Activated CD8-positive, alpha-beta T cell treated with anti-CD3 and anti-CD28 coated beads for 36 hours (primary cell): ENCODE measurements at regions of chr14 and their contacts with region 1.

Region 1: DNA sequence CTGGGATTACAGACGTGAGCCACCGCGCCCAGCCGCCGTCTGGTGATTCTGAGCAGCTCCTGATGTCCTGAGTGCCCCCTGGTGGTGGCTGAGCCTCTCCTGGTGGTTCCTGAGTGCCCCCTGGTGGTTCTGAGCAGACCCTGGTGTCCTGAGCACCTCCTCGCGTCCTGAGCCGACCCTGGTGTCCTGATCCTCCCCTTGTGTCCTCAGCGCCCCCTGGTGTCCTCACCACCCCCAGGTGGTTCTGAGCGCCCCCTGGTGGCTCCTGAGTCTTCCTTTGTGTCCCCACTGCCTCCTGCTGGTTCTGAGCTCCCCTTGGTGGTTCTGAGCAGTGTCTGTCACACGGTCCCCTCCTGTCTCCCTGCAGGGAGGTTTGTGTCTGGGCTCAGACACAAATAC is 1304.9 kb downstream of the TMEM121 start:
- DNase-seq: peak; percentile 89
- ATAC-seq: peak; percentile 74
- H3K4me3 Mint-ChIP-seq: no peak overlapping the region
- H3K27ac Mint-ChIP-seq: no peak overlapping the region
- H3K4me1 Mint-ChIP-seq: no peaks in the 10 kb centered on the region
- H3K27me3 Mint-ChIP-seq: peaks cover 3% of the 10 kb centered on the region
- CTCF ChIP-seq: peak; percentile 91

Region 2: GRCh38 chr14:106436310-106436905 is 394.9 kb before region 1 on chr14:
- CTCF ChIA-PET with region 1: no interaction called
- POLR2A ChIA-PET with region 1: no interaction called
- intact Hi-C with region 1: no loop called
- DNase-seq: no peak
- ATAC-seq: no peak
- H3K4me3 Mint-ChIP-seq: no peak overlapping the region
- H3K27ac Mint-ChIP-seq: no peak overlapping the region
- H3K4me1 Mint-ChIP-seq: no peaks in the 10 kb centered on the region
- H3K27me3 Mint-ChIP-seq: no peaks in the 10 kb centered on the region
- CTCF ChIP-seq: no peak

Region 3: DNA sequence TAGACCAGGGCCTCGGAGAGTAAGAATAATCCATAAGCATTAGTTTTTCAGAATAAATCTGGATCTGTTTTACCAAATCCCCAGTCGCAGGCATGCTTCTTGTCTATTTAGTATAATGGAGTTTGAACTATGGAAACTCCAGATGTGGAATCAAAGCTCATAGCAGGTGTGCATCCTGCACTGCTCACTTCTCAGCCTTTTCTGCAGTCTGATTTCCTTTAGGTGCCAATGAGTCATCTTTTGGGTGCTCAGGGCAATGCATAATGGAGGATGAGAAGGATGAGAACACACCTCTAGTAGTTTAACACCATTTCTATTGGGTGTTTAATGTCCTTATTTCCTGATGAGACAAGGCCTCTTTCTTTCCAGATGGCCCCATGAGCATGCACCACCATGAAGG is 343.7 kb before region 1 on chr14:
- CTCF ChIA-PET with region 1: no interaction called
- POLR2A ChIA-PET with region 1: no interaction called
- intact Hi-C with region 1: no loop called
- DNase-seq: no peak
- ATAC-seq: peak; percentile 35
- H3K4me3 Mint-ChIP-seq: no peak overlapping the region
- H3K27ac Mint-ChIP-seq: no peak overlapping the region
- H3K4me1 Mint-ChIP-seq: peaks cover 17% of the 10 kb centered on the region
- H3K27me3 Mint-ChIP-seq: no peaks in the 10 kb centered on the region
- CTCF ChIP-seq: no peak

Region 4: DNA sequence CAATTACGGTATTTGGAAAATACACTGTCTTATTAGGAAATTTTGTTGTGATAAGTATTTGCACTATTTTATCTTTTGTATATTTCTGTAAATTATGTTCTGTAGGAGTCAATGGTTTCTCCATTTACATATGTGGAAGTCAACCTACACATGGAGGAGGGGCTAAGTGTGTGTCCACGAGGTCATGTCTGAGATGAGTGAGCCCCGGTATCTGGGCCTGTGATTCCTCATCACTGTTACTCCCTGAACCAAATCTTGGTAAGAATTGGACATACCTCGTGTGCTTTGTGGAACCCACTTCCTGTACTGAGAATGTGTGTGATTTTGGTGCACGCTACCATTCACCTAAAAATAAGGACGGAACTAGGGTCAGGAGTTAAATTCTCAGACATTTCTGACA is 199.4 kb before region 1 on chr14:
- CTCF ChIA-PET with region 1: no interaction called
- POLR2A ChIA-PET with region 1: no interaction called
- intact Hi-C with region 1: no loop called
- DNase-seq: peak; percentile 19
- ATAC-seq: peak; percentile 30
- H3K4me3 Mint-ChIP-seq: no peak overlapping the region
- H3K27ac Mint-ChIP-seq: no peak overlapping the region
- H3K4me1 Mint-ChIP-seq: no peaks in the 10 kb centered on the region
- H3K27me3 Mint-ChIP-seq: peaks cover 19% of the 10 kb centered on the region
- CTCF ChIP-seq: no peak

Region 5: DNA sequence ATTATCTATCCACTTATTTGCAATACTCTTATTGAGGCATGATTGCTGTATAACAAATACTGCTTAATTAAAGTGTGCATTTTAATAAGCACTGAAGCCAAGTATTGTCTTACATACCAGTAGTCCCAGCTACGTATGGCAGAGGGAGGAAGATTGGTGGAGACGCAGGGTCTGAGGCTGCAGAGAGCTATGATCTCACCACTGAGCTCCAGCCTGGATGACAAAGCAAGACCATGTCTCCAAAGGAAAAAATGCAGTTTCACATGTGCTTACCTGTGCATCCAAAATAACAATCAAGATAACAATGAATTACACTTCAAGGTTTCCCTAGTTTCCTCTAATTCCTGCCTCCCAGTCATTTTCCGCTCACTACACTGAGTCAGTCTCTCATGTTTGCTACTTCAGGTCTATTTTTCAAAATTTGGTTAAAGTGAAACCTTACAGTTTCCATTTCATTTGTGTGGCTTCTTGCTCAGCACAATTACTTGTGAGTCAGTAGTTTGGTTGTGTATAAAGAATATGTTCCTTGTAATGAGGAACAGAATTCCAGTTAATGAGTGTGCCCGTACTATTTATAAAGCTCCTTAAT is 54.8 kb before region 1 on chr14:
- CTCF ChIA-PET with region 1: interaction called, 20 read pairs
- POLR2A ChIA-PET with region 1: no interaction called
- intact Hi-C with region 1: no loop called
- DNase-seq: no peak
- ATAC-seq: no peak
- H3K4me3 Mint-ChIP-seq: no peak overlapping the region
- H3K27ac Mint-ChIP-seq: no peak overlapping the region
- H3K4me1 Mint-ChIP-seq: peaks cover 17% of the 10 kb centered on the region
- H3K27me3 Mint-ChIP-seq: no peaks in the 10 kb centered on the region
- CTCF ChIP-seq: no peak

Region 6: DNA sequence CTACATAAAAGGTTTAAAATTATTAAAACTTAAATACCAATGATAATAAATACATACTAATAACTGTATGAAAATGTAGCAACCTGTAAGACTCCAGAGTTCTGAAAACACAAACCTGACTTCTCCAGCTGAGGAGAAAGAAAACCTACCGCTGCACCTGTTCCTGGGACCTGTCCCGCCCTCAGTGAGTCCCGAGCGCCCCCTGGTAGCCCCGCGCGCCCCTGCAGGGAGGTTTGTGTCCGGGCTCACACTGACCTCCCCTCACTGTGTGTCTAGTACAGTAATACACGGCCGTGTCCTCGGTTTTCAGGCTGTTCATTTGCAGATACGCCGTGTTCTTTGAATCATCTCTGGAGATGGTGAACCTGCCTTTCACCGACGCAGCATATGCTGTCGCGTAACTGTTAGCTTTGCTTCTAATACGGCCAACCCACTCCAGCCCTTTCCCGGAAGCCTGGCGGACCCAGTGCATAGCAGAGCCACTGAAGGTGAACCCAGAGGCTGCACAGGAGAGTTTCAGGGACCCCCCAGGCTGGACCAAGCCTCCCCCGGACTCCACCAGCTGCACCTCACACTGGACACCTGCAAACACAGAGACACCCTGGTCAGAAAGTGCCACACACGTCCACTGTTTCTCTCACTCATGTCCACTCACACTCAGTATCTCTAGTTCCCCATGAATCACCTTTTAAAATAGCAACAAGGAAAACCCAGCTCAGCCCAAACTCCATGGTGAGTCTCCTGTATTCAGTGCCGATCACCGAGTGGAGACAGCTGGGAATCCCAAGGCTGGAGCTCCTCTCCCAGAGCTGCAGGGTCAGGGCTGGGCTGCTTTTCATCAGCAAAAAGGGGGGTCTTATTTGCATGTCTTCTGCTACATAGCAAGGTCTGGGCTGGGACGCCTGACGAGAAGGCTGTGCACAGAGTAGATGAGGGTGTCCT is 28.6 kb before region 1 on chr14:
- CTCF ChIA-PET with region 1: interaction called, 32 read pairs
- POLR2A ChIA-PET with region 1: no interaction called
- intact Hi-C with region 1: no loop called
- DNase-seq: peak; percentile 43
- ATAC-seq: no peak
- H3K4me3 Mint-ChIP-seq: no peak overlapping the region
- H3K27ac Mint-ChIP-seq: no peak overlapping the region
- H3K4me1 Mint-ChIP-seq: no peaks in the 10 kb centered on the region
- H3K27me3 Mint-ChIP-seq: peaks cover 46% of the 10 kb centered on the region
- CTCF ChIP-seq: peak; percentile 44

Region 7: GRCh38 chr14:106844608-106845285 is 13.4 kb after region 1 on chr14:
- CTCF ChIA-PET with region 1: interaction called, 176 read pairs
- POLR2A ChIA-PET with region 1: interaction called, 8 read pairs
- intact Hi-C with region 1: no loop called
- DNase-seq: peak; percentile 65
- ATAC-seq: peak; percentile 45
- H3K4me3 Mint-ChIP-seq: peak overlapping the region; percentile 86
- H3K27ac Mint-ChIP-seq: peak overlapping the region; percentile 87
- H3K4me1 Mint-ChIP-seq: peaks cover 38% of the 10 kb centered on the region
- H3K27me3 Mint-ChIP-seq: no peaks in the 10 kb centered on the region
- CTCF ChIP-seq: no peak

Region 8: GRCh38 chr14:106879241-106879640 is 47.9 kb after region 1 on chr14:
- CTCF ChIA-PET with region 1: interaction called, 298 read pairs
- POLR2A ChIA-PET with region 1: no interaction called
- intact Hi-C with region 1: no loop called
- DNase-seq: peak; percentile 91
- ATAC-seq: peak; percentile 92
- H3K4me3 Mint-ChIP-seq: no peak overlapping the region
- H3K27ac Mint-ChIP-seq: no peak overlapping the region
- H3K4me1 Mint-ChIP-seq: peaks cover 3% of the 10 kb centered on the region
- H3K27me3 Mint-ChIP-seq: peaks cover 21% of the 10 kb centered on the region
- CTCF ChIP-seq: peak; percentile 82